ENCODE measurements at regions of chr14 and their contacts with region 1.

Region 1: DNA sequence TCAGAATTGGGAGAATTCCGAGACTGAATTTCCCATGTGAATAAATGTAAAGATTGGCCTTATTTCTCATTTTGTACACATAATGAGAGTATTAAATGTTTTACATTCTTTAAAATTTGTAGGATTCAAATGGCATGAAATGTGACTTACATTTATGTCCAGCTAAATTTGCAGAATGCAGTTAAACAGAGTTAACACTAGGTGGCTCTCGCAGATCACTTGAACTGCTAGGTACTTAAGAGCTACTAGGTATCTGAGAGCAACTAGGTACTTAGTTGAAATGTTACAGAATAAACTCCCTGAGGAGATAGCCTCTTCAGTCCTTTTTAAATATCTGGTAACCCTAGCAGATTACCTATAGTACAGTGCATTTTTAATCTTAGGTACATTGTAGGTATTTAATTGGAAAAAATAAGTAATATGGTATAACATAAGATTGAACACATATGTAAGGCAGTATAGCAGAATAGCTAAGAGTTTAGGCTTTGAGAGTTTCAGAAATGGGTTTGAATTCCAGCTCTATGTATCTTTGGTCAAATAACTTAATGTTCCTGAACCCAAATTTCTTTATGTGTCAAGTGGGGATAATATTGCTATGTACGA is 73.8 kb downstream of the KIAA0586 start:
- DNase-seq: no peak
- H3K4me3 ChIP-seq: no peak overlapping the region
- H3K27ac ChIP-seq: no peak overlapping the region
- H3K4me1 ChIP-seq: no peaks in the 10 kb centered on the region
- H3K27me3 ChIP-seq: no peaks in the 10 kb centered on the region
- CTCF ChIP-seq: peak; percentile 70 to 88 (median 79)

Region 2: DNA sequence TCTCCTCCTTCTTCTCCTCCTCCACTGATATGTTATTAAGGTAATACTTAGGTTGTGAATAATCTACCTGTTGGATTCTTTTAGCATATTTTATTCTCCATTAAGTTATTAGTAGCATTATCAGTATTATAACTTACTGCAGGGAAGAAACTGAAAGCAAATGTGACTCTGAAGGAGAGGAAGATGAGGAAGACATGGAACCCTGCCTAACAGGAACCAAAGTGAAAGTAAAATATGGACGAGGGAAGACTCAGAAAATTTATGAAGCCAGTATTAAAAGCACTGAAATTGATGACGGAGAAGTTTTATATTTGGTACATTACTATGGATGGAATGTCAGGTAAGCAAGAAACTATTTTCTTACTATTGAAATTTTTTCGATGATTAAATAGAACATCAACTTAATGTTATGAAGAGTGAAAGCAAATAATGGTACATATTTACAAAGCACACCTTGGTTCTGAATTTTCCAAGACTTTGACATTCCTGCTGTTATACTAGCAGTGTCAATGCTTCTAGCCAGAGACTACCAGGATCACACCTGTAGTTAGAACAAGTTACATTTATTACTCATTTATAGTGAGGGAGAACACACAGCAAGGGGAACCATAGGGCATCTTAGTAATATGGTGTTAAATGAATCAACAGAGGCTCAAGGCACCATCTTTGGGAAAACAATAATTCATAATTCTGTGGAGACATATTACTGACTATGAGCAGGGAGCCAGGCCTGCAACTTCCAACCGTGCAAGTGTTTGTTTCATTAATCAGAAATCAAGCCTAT is 147.6 kb before region 1 on chr14:
- intact Hi-C with region 1: no loop called
- DNase-seq: no peak
- H3K4me3 ChIP-seq: peak overlapping the region; percentile 11 to 32
- H3K27ac ChIP-seq: no peak overlapping the region
- H3K4me1 ChIP-seq: no peaks in the 10 kb centered on the region
- H3K27me3 ChIP-seq: no peaks in the 10 kb centered on the region
- CTCF ChIP-seq: no peak

Region 3: GRCh38 chr14:58476320-58476719 is 25.0 kb before region 1 on chr14:
- intact Hi-C with region 1: no loop called
- DNase-seq: no peak
- H3K4me3 ChIP-seq: no peak overlapping the region
- H3K27ac ChIP-seq: no peak overlapping the region
- H3K4me1 ChIP-seq: no peaks in the 10 kb centered on the region
- H3K27me3 ChIP-seq: no peaks in the 10 kb centered on the region
- CTCF ChIP-seq: no peak

Region 4: DNA sequence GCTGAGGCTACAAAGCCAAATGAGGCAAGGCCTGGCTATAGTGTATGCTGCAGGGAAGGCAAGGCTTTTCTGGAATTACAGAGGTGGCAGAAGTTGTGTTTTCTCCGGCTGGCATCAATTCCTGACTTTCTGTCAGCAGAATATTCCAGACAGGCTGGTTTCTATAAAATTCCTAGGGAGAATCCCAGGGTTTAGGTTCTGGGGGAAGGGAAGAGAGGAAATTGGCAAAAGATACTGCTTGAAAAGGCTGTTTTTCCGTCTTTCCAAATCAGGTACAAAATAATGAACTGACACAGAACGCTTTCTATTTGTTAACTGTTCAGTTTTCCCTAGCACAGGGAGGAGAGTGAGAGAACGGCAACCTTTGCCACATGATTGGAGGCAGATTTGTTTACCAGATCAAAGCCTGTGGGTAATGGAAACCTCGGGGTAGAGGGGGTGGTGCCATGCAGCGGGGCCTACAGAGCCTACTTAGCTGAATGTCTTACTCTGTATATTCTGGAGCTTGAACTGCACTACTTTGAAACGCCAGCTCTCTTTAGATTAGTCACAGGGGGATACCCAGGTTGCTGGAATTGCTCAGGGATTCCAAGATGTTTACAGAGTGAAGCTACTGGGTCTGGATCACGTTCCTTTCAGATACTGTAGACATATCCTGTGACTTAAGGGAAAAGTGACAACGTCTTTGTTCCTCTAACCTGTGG is 70.6 kb after region 1 on chr14:
- intact Hi-C with region 1: loop called (anchors 5 kb)
- DNase-seq: no peak
- H3K4me3 ChIP-seq: no peak overlapping the region
- H3K27ac ChIP-seq: no peak overlapping the region
- H3K4me1 ChIP-seq: peaks cover 0 to 4% of the 10 kb centered on the region in 2 donors
- H3K27me3 ChIP-seq: no peaks in the 10 kb centered on the region
- CTCF ChIP-seq: no peak

Region 5: GRCh38 chr14:59055439-59056045 is 554.2 kb after region 1 on chr14:
- intact Hi-C with region 1: loop called (anchors 1 kb)
- DNase-seq: no peak
- H3K4me3 ChIP-seq: no peak overlapping the region
- H3K27ac ChIP-seq: no peak overlapping the region
- H3K4me1 ChIP-seq: no peaks in the 10 kb centered on the region
- H3K27me3 ChIP-seq: no peaks in the 10 kb centered on the region
- CTCF ChIP-seq: peak; percentile 53 to 77 (median 54)

Region 6: GRCh38 chr14:59126710-59127432 is 625.6 kb after region 1 on chr14:
- intact Hi-C with region 1: loop called (anchors 5 kb)
- DNase-seq: no peak
- H3K4me3 ChIP-seq: no peak overlapping the region
- H3K27ac ChIP-seq: no peak overlapping the region
- H3K4me1 ChIP-seq: no peaks in the 10 kb centered on the region
- H3K27me3 ChIP-seq: no peaks in the 10 kb centered on the region
- CTCF ChIP-seq: peak; percentile 77 to 81 (median 78)